Dendritic cell treated with granulocyte-macrophage colony-stimulating factor and Interleukin-4, amounts not matched to agents 40 ng/mL and 50 ng/mL, for 4 days (primary cell): ENCODE measurements at regions of chr14 and their contacts with region 1.

Region 1: DNA sequence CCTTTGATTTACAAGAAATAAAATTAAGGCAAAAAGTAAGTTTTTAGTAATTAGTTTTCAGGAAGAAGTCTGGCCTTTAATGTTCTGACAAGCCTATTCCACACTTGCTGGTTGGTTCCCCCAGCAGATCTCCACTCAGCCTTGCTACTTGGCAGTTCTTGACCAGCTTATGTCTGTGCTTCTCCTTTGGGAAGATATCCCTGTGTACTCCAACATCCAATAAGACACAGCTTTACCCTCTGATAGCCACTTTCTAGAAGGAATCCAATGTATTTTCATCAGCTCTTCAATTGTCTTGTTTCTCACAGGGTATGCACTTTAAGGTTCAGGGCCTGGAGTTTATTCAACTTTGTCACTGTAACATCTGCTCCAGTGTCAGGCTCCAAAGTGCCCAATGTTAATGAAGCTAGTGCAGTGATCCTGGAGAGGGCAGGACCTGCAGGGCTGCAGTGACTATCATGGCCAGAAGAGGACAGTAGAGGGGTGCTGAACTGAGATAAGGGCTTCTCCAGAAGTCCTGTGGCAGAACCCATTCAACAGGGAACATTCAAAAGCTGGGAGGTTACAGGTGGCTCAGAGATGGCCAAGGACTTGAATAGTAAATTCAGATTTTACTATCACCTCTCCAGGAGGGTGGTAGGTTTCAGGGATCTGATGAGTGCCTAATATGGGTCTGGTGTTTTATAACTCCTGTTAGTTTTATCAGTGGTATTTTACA is 22.9 kb downstream of the JKAMP start:
- H3K4me3 Mint-ChIP-seq: no peak overlapping the region
- H3K27ac Mint-ChIP-seq: no peak overlapping the region
- H3K4me1 Mint-ChIP-seq: no peaks in the 10 kb centered on the region
- H3K27me3 Mint-ChIP-seq: no peaks in the 10 kb centered on the region

Region 2: GRCh38 chr14:58712357-58712756 is 794.9 kb before region 1 on chr14:
- intact Hi-C with region 1: no loop called
- H3K4me3 Mint-ChIP-seq: no peak overlapping the region
- H3K27ac Mint-ChIP-seq: no peak overlapping the region
- H3K4me1 Mint-ChIP-seq: peaks cover 6% of the 10 kb centered on the region
- H3K27me3 Mint-ChIP-seq: no peaks in the 10 kb centered on the region

Region 3: GRCh38 chr14:59464486-59465315 is 42.5 kb before region 1 on chr14:
- intact Hi-C with region 1: no loop called
- H3K4me3 Mint-ChIP-seq: peak overlapping the region; percentile 79
- H3K27ac Mint-ChIP-seq: no peak overlapping the region
- H3K4me1 Mint-ChIP-seq: peaks cover 10% of the 10 kb centered on the region
- H3K27me3 Mint-ChIP-seq: peaks cover 26% of the 10 kb centered on the region

Region 4: DNA sequence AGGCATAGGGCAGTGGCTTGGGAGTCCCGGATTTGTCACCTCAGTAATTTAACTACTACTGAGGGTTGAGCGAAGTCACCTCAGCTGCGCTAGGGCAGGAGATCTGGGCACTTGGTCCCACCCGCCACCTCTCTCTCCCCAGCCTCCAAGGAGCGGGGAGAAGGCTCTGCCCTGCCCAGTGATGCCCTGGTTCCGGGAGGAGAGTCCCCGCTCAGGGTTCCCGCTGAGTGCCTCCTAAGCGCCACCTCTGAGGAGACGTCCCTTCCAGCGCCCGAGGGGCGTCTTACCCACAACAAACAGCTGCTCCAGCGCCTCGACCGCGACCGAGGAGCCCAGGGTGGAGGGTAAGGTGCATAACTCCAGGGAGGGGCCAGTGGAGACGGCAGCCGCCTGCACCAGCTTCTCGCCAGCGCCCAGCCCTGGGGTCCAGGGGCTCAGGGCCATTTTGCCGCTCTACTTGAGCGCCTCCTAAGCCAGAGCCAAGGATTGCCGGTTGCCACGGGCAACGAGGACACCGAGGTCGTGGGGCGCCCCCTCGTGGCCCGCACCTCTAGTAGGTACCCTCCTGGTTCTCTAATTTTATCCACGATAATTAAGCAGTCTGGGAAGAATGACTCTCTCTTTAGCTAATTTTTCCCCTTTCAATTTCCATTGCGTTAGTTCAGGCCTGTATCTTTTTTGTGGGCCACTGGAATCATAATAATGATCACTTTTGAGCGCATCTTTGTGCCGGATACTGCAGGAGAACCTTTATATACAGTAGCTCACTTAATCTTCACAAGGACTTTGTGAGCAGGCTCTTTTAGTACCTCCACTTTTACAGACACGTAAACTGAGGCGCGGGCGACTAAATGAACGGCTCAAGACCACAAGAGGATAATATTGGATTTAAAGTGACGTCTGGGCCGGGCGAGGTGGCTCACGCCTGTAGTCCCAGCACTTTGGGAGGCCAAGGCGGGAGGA is 69.4 kb after region 1 on chr14 and contains the start of gene CCDC175:
- intact Hi-C with region 1: loop called (anchors 1 kb)
- H3K4me3 Mint-ChIP-seq: peak within 1 kb of the TSS; percentile 72
- H3K27ac Mint-ChIP-seq: no peak within 1 kb of the TSS
- H3K4me1 Mint-ChIP-seq: no peaks in the 10 kb centered on the region
- H3K27me3 Mint-ChIP-seq: peaks cover 18% of the 10 kb centered on the region

Region 5: DNA sequence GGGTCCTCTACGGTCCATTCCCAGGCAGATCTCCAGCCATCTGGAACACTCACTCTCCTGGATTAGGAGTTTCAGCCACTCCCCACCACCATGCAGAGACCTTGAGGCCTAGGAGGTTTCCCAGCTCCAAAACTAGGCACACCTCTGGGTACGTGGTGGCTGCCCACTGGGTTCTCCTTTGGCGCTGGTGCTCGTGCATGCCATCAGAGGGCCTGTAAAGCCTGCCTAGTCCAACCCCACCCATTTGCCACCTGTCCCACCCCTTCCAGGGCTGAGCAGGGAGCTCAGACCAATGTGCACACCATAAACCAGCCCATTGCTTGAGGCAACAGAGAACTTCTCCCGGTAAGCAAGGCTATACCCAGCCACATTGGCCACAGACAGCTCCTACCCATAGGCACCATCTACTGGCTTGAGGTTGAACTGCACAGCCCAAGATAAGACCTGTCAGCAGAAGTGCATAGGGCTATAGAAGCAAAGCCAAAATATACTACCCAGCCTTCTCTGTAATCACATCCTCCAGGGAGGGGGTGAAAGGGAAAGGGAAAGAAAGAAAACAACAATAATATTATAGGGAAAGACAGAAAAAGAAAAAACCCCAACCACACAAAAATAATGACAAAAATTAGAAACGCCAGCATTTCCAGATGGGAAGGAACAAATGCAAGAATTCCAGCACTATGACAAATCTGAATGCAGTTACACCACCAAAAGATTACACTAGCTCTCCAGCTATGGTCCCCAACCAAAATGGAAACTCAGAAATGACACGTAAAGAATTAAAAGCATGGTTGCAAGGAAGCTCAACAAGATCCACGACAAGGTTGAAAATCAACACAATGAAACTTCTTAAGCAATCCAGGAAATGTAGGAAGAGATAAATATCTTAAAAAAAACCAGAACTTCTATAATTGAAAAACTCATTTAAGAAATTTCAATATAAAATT is 181.3 kb after region 1 on chr14:
- intact Hi-C with region 1: loop called (anchors 10 kb)
- H3K4me3 Mint-ChIP-seq: no peak overlapping the region
- H3K27ac Mint-ChIP-seq: no peak overlapping the region
- H3K4me1 Mint-ChIP-seq: peaks cover 9% of the 10 kb centered on the region
- H3K27me3 Mint-ChIP-seq: no peaks in the 10 kb centered on the region

Region 6: GRCh38 chr14:59897761-59898383 is 390.6 kb after region 1 on chr14:
- intact Hi-C with region 1: loop called (anchors 5 kb)
- H3K4me3 Mint-ChIP-seq: no peak overlapping the region
- H3K27ac Mint-ChIP-seq: peak overlapping the region; percentile 63
- H3K4me1 Mint-ChIP-seq: peaks cover 11% of the 10 kb centered on the region
- H3K27me3 Mint-ChIP-seq: no peaks in the 10 kb centered on the region

Region 7: DNA sequence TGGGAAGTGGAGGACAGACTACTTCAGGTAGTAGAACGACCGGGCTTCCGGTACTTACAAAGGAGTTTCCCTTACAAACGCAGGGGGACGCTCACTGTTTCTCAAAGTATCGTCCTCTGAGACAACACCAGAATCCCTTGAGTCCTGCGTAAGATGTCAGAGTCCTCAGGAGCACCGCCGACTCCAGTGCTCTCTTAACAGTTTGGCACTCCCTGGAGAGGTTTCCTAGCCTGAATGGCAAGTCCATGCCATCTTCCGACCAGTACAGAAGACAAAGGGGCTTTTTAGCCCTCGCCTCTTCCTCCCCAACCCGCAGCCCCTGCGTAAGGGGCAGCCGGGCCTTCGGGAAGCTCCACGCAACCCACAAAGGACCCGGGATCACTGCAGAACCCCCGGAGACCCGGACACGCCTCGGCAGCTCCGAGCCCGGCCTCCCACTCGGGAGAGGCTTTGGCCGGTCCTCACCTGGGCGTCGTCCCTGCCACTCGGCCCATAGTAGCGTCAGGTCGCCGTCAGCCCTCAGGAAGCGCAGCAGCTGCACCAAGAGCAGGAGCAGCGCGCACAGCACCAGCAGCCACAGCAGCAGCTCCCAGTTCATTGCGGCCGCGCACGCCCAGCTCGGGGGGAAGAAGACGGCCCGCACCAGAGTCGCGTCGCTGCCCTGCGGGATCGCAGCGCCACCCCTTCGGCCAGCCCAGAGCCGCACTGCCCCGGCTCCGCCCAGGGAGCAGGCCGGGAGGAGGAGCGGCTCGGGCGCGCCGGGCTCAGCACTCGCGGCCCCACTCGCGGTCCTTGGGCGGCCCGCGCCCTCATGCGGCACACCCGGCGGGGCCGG is 657.7 kb after region 1 on chr14 and contains the start of gene DHRS7:
- intact Hi-C with region 1: loop called (anchors 10 kb)
- H3K4me3 Mint-ChIP-seq: peak within 1 kb of the TSS; percentile 95
- H3K27ac Mint-ChIP-seq: peak within 1 kb of the TSS; percentile 95
- H3K4me1 Mint-ChIP-seq: peaks cover 13% of the 10 kb centered on the region
- H3K27me3 Mint-ChIP-seq: no peaks in the 10 kb centered on the region